CD8-positive, alpha-beta T cell (primary cell): ENCODE measurements at regions of chr2 and their contacts with region 1.

Region 1: GRCh38 chr2:136052369-136053362 is 65.3 kb downstream of the CXCR4 start:
- DNase-seq: peak in 2 of 9 experiments; percentile 39 to 60
- ATAC-seq: peak; percentile 22
- H3K4me3 ChIP-seq: no peak overlapping the region
- H3K4me3 Mint-ChIP-seq: peak overlapping the region; percentile 38
- H3K27ac ChIP-seq: peak overlapping the region; percentile 23 to 45
- H3K27ac Mint-ChIP-seq: peak overlapping the region; percentile 86
- H3K4me1 ChIP-seq: peaks cover 88% of the 10 kb centered on the region
- H3K4me1 Mint-ChIP-seq: peaks cover 82% of the 10 kb centered on the region
- H3K27me3 ChIP-seq: no peaks in the 10 kb centered on the region
- H3K27me3 Mint-ChIP-seq: no peaks in the 10 kb centered on the region
- CTCF ChIP-seq: no peak

Region 2: DNA sequence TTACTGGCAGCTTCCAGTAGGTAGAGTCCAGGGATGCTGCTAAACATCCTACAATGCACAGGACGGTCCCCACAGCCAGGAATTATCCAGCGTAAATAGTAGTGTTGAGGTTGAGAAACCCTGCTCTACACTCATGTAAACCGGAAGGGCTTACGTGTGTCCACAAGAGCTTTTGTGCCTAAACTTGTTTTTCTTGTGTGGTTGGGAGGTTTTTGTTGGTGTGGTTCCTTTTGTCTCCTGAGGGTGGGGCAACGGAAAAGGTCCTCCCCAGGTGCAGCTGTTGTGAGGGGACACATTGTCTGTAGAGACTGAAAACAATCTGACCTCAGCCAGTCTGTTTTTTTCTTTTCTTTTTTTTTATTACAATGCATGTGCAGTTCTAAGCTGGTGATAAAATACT is 1871.5 kb before region 1 on chr2:
- CTCF ChIA-PET with region 1: no interaction called
- POLR2A ChIA-PET with region 1: no interaction called
- intact Hi-C with region 1: no loop called
- DNase-seq: peak; percentile 19 to 83 (median 58)
- ATAC-seq: peak; percentile 82
- H3K4me3 ChIP-seq: no peak overlapping the region
- H3K4me3 Mint-ChIP-seq: peak overlapping the region; percentile 49
- H3K27ac ChIP-seq: peak overlapping the region; percentile 17 to 55
- H3K27ac Mint-ChIP-seq: peak overlapping the region; percentile 88
- H3K4me1 ChIP-seq: peaks cover 70% of the 10 kb centered on the region
- H3K4me1 Mint-ChIP-seq: peaks cover 91% of the 10 kb centered on the region
- H3K27me3 ChIP-seq: no peaks in the 10 kb centered on the region
- H3K27me3 Mint-ChIP-seq: no peaks in the 10 kb centered on the region
- CTCF ChIP-seq: no peak

Region 3: GRCh38 chr2:135974036-135974435 is 78.6 kb before region 1 on chr2:
- CTCF ChIA-PET with region 1: no interaction called
- POLR2A ChIA-PET with region 1: interaction called, 4 read pairs
- intact Hi-C with region 1: loop called in 1 of 2 experiments (anchors 5 kb)
- DNase-seq: no peak
- ATAC-seq: no peak
- H3K4me3 ChIP-seq: no peak overlapping the region
- H3K4me3 Mint-ChIP-seq: no peak overlapping the region
- H3K27ac ChIP-seq: no peak overlapping the region
- H3K27ac Mint-ChIP-seq: no peak overlapping the region
- H3K4me1 ChIP-seq: no peaks in the 10 kb centered on the region
- H3K4me1 Mint-ChIP-seq: peaks cover 64% of the 10 kb centered on the region
- H3K27me3 ChIP-seq: no peaks in the 10 kb centered on the region
- H3K27me3 Mint-ChIP-seq: no peaks in the 10 kb centered on the region
- CTCF ChIP-seq: no peak

Region 4: DNA sequence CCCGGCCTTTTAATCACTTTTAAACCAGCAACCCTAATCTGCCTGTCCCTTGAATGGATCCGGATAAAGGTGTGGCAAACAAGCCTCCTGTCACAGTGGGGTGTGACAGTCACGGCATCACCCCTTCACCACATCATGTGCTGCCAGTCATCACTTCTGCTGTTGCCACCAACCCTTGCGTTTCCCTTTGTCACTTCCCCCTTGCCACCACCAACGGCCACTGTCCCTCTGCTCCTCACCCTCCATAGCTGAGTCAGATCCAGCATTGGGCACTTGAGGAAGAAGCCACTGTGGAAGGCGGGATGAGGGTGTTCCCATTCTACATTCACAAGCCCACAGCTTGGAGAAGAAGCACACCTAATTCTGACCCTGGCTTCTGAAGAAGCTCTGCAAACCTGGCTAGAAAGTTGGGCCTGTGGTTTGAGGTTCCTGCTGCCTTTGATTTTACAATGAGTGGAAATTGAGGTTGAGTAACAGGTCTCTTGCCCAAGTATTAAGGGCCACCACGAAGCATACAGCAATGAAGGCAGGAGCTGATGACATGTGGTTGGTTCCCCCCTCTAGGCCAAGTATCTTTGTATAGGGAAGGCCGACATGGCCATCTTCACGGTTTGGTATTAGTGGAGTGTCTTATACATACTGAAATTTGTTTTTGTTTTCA is 44.3 kb before region 1 on chr2:
- CTCF ChIA-PET with region 1: no interaction called
- POLR2A ChIA-PET with region 1: interaction called, 4 read pairs
- intact Hi-C with region 1: loop called in 1 of 2 experiments (anchors 5 kb)
- DNase-seq: peak; percentile 43 to 92 (median 61)
- ATAC-seq: peak; percentile 97
- H3K4me3 ChIP-seq: no peak overlapping the region
- H3K4me3 Mint-ChIP-seq: peak overlapping the region; percentile 40
- H3K27ac ChIP-seq: peak overlapping the region; percentile 29 to 82
- H3K27ac Mint-ChIP-seq: peak overlapping the region; percentile 88
- H3K4me1 ChIP-seq: peaks cover 21% of the 10 kb centered on the region
- H3K4me1 Mint-ChIP-seq: peaks cover 36% of the 10 kb centered on the region
- H3K27me3 ChIP-seq: no peaks in the 10 kb centered on the region
- H3K27me3 Mint-ChIP-seq: no peaks in the 10 kb centered on the region
- CTCF ChIP-seq: no peak

Region 5: DNA sequence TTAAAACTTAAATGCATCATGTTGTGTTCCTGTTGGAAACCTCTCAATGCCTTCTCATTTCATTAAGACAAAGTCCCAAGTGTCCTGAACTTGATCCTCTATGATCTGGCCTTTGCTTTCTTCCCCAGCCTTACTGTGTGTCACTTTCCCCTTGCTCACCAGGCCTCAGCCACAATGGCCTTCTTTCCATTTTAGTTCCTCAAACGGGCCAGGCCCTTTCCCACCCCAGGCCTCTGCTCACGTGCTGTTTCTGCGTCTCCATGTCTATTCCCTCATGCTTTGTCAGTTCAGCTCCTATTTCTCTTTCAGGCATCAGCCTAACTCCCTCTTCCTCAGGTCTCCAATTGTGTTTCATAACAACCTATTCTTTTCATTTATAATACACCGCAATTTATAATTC is 45.8 kb after region 1 on chr2:
- CTCF ChIA-PET with region 1: no interaction called
- POLR2A ChIA-PET with region 1: no interaction called
- intact Hi-C with region 1: loop called in 1 of 2 experiments (anchors 5 kb)
- DNase-seq: no peak
- ATAC-seq: no peak
- H3K4me3 ChIP-seq: no peak overlapping the region
- H3K4me3 Mint-ChIP-seq: no peak overlapping the region
- H3K27ac ChIP-seq: no peak overlapping the region
- H3K27ac Mint-ChIP-seq: no peak overlapping the region
- H3K4me1 ChIP-seq: no peaks in the 10 kb centered on the region
- H3K4me1 Mint-ChIP-seq: peaks cover 4% of the 10 kb centered on the region
- H3K27me3 ChIP-seq: no peaks in the 10 kb centered on the region
- H3K27me3 Mint-ChIP-seq: no peaks in the 10 kb centered on the region
- CTCF ChIP-seq: no peak

Region 6: GRCh38 chr2:136112317-136113208 is 59.9 kb after region 1 on chr2:
- CTCF ChIA-PET with region 1: no interaction called
- POLR2A ChIA-PET with region 1: interaction called, 4 read pairs
- intact Hi-C with region 1: loop called (anchors 5 kb)
- DNase-seq: peak in 3 of 9 experiments; percentile 58 to 71 (median 69)
- ATAC-seq: no peak
- H3K4me3 ChIP-seq: no peak overlapping the region
- H3K4me3 Mint-ChIP-seq: no peak overlapping the region
- H3K27ac ChIP-seq: no peak overlapping the region
- H3K27ac Mint-ChIP-seq: peak overlapping the region; percentile 66
- H3K4me1 ChIP-seq: peaks cover 34% of the 10 kb centered on the region
- H3K4me1 Mint-ChIP-seq: peaks cover 35% of the 10 kb centered on the region
- H3K27me3 ChIP-seq: no peaks in the 10 kb centered on the region
- H3K27me3 Mint-ChIP-seq: no peaks in the 10 kb centered on the region
- CTCF ChIP-seq: no peak